MCF 10A (cell line): ENCODE measurements at regions of chr4 and their contacts with region 1.

Region 1: DNA sequence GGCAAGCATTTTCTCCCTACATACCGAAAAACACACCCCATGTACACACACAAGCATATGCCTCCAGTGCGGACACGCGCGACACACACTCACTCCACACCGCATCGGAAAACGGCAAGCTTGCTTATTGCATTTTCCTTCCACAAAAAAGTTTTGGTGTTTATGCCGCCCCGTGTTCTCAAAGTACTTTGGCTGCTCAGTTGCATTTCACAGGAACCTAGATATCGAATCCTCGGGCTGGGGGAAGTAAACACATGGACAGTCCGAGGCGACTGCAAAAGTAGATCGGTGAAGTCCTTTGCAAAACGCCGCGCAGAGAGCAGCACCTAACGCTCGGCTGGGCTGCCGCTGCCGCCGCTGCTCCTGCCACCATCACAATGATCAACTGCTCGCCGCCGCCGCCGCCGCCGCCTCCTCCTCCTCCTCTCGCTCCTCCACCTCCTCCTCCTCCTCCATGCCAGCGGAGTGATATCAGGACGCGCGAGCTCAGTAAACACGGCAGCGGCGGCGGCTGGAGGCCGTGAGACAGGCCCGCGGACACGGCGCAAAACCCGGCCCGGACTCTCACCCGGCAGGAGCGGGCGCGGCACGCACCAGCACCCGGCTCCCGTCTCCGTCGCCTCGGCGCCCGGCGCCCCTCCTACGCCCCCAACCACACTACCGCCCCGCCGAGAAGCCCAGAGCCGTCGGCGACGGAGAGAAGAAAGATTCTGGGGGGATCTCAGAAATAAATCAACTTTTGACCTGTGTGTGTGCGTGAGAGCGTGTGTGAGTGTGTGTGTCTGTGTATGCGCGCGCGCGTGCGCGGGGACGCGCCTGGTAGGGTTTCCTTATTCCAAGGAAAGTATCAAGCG is at the start of gene MAML3:
- DNase-seq: peak; percentile 94
- H3K4me3 Mint-ChIP-seq: peak within 1 kb of the TSS; percentile 95
- H3K27ac Mint-ChIP-seq: peak within 1 kb of the TSS; percentile 86
- H3K4me1 Mint-ChIP-seq: no peaks in the 10 kb centered on the region
- H3K27me3 Mint-ChIP-seq: no peaks in the 10 kb centered on the region
- CTCF ChIP-seq: no peak
- total RNA-seq, gene MAML3: 0.89 and 1.7 TPM in 2 replicates

Region 2: GRCh38 chr4:139665690-139666529 is 488.0 kb before region 1 on chr4 and contains the start of gene MGST2:
- CTCF ChIA-PET with region 1: interaction called, 3 read pairs
- POLR2A ChIA-PET with region 1: interaction called, 21 read pairs
- intact Hi-C with region 1: no loop called
- DNase-seq: peak; percentile 65
- H3K4me3 Mint-ChIP-seq: peak within 1 kb of the TSS; percentile 81
- H3K27ac Mint-ChIP-seq: peak within 1 kb of the TSS; percentile 93
- H3K4me1 Mint-ChIP-seq: peaks cover 23% of the 10 kb centered on the region
- H3K27me3 Mint-ChIP-seq: no peaks in the 10 kb centered on the region
- CTCF ChIP-seq: no peak
- total RNA-seq, gene MGST2: 27.5 and 41.5 TPM in 2 replicates

Region 3: GRCh38 chr4:139711461-139711860 is 442.5 kb before region 1 on chr4:
- CTCF ChIA-PET with region 1: no interaction called
- POLR2A ChIA-PET with region 1: no interaction called
- intact Hi-C with region 1: no loop called
- DNase-seq: peak; percentile 20
- H3K4me3 Mint-ChIP-seq: no peak overlapping the region
- H3K27ac Mint-ChIP-seq: no peak overlapping the region
- H3K4me1 Mint-ChIP-seq: no peaks in the 10 kb centered on the region
- H3K27me3 Mint-ChIP-seq: no peaks in the 10 kb centered on the region
- CTCF ChIP-seq: no peak

Region 4: DNA sequence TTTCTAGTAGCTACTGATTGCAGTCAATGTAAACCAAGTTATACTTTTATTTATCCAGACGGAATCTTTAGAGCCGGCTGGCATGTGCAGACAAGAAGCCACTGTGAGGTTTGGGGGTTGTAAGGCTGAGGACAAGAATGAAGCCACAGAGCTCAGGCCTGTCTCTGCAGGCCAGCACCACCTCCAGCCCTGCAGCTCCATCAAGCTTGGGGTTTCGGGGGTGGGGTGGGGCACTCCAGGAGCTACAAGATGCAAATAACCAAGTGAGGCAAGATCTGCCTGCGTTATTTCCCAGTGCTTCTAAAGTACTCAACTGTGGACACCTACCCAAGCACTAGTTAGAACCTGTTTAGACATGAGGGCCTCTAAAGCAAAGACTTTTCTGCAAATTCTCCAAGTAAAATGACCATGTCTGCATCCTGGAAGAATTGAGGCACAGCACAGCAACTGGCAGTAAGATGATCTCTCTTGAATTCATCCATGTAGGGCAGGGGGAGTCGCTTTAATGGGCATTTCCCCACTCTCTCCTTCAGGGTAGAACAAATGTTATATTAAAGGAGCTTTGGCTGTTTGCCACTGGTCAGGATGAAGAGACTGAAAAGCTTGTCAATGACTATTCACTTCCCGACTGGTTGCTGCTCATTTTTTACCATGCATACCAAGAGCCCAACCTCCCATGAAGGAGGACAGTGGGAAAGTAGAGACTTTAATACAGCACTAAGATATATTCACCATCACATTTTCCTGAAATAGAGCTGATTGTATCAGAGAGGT is 265.8 kb before region 1 on chr4:
- CTCF ChIA-PET with region 1: interaction called, 3 read pairs
- POLR2A ChIA-PET with region 1: interaction called, 82 read pairs
- intact Hi-C with region 1: loop called (anchors 5 kb)
- DNase-seq: peak; percentile 84
- H3K4me3 Mint-ChIP-seq: peak overlapping the region; percentile 6
- H3K27ac Mint-ChIP-seq: peak overlapping the region; percentile 51
- H3K4me1 Mint-ChIP-seq: peaks cover 39% of the 10 kb centered on the region
- H3K27me3 Mint-ChIP-seq: no peaks in the 10 kb centered on the region
- CTCF ChIP-seq: no peak

Region 5: DNA sequence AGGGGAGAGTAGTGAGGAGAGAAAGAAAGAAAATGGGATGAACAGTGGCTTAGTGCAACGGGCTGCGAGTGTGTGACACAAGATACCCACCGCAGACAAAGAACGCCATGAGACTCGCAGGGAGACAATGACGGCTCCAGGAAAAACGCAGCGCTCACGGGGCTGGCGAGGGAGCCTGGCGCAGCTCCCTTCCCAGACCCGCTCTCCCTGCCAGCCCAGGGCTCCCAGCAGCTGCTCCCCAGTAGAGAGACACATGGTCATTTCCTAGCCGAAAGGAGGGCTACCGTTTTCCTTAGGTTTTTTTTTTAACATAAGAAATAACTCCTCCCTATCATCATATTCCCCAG is 149.4 kb before region 1 on chr4:
- CTCF ChIA-PET with region 1: no interaction called
- POLR2A ChIA-PET with region 1: no interaction called
- intact Hi-C with region 1: no loop called
- DNase-seq: no peak
- H3K4me3 Mint-ChIP-seq: no peak overlapping the region
- H3K27ac Mint-ChIP-seq: no peak overlapping the region
- H3K4me1 Mint-ChIP-seq: no peaks in the 10 kb centered on the region
- H3K27me3 Mint-ChIP-seq: no peaks in the 10 kb centered on the region
- CTCF ChIP-seq: no peak

Region 6: GRCh38 chr4:140095694-140096482 is 58.1 kb before region 1 on chr4:
- CTCF ChIA-PET with region 1: interaction called, 3 read pairs
- POLR2A ChIA-PET with region 1: interaction called, 5 read pairs
- intact Hi-C with region 1: loop called (anchors 5 kb)
- DNase-seq: peak; percentile 65
- H3K4me3 Mint-ChIP-seq: peak overlapping the region; percentile 67
- H3K27ac Mint-ChIP-seq: peak overlapping the region; percentile 76
- H3K4me1 Mint-ChIP-seq: peaks cover 63% of the 10 kb centered on the region
- H3K27me3 Mint-ChIP-seq: no peaks in the 10 kb centered on the region
- CTCF ChIP-seq: no peak

Region 7: DNA sequence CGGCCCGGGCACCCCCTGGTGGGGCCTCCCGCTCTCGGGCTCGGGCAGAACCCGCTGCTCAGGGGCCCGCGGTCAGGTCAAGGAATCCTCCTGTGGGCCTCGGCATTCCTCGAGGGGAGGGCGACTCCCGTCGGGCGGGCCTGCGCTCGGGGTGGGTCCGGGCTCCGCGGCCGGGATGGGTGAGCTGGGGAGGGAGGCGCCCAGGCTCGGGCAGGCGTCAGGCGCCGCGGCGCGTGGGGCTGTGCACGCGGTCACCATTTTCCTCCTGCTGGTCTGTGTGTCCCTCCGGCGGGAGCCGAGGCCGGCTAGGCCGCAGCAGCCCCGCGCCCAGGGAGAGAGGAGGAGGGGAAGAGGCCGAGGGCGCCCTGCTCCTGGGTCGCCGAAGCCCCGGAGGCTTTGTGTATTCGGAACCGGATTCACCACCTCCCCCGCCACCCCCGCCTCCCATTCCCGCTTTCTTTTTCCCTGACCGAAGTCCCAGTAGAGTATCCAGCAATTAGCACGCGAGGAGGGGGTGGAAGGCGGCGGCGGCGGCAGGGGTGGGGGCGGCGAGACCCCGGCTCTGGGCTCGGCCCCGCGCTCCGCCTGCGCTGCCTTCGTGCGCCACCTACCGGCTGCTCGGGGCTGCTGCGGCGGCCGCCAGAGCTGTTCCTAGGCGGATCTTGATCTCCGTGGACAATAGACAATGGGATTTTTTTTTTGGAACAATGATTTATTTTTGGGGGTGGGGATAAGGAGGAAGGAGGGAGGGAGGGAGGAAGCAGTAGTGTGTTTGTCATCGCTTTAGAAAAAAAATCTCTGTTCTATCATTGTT is 99.0 kb after region 1 on chr4:
- CTCF ChIA-PET with region 1: interaction called, 5 read pairs
- POLR2A ChIA-PET with region 1: interaction called, 47 read pairs
- intact Hi-C with region 1: loop called (anchors 1 kb)
- DNase-seq: peak; percentile 60
- H3K4me3 Mint-ChIP-seq: peak overlapping the region; percentile 59
- H3K27ac Mint-ChIP-seq: no peak overlapping the region
- H3K4me1 Mint-ChIP-seq: peaks cover 22% of the 10 kb centered on the region
- H3K27me3 Mint-ChIP-seq: no peaks in the 10 kb centered on the region
- CTCF ChIP-seq: peak; percentile 97

Region 8: GRCh38 chr4:140515423-140515822 is 361.5 kb after region 1 on chr4:
- CTCF ChIA-PET with region 1: no interaction called
- POLR2A ChIA-PET with region 1: no interaction called
- intact Hi-C with region 1: no loop called
- DNase-seq: no peak
- H3K4me3 Mint-ChIP-seq: no peak overlapping the region
- H3K27ac Mint-ChIP-seq: no peak overlapping the region
- H3K4me1 Mint-ChIP-seq: no peaks in the 10 kb centered on the region
- H3K27me3 Mint-ChIP-seq: peaks cover 13% of the 10 kb centered on the region
- CTCF ChIP-seq: no peak